ENCODE measurements at regions of chr13 and their contacts with region 1.

Region 1: DNA sequence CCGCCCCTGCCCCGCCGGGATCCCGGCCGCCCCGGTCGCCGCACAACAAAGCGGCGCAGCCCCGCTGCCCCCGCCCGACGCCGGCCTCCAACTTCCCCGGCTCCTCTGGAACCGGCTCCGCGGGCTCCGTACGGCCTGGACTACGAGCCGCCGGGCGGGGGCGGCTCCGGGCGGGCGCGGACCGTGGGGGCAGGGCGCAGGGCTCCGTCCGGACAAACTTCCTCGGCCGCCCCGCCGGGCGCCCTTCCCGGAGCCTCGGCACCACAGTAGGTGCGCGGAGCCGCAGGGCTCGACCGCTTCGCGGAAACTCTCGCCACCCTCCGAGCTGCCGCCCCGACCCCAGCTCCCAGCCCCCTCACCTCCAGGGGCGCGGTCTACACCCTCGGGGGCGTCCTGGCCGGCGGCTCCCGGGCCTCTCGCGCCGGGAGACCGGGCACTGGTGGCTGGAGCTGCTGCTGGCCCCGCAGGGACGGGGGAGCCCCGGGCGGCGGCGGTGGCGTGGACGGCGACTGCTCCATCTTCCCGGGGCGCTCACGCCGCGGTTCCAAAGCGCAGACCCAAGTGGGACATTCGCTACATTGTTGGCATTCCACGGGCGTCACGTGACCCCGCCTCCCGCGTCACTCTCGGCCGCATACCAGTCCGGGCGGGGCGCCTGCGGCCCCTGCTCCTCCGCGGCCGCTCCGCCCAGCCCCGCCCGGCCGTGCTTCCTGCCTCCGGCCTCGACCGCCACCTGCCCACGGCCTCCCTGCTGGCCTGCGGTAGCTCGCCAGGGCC is at the start of gene LATS2:
- DNase-seq: peak; percentile 94
- ATAC-seq: peak; percentile 83
- H3K4me3 ChIP-seq: peak within 1 kb of the TSS; percentile 96
- H3K27ac ChIP-seq: peak within 1 kb of the TSS; percentile 75
- H3K4me1 ChIP-seq: peaks cover 18% of the 10 kb centered on the region
- H3K27me3 ChIP-seq: no peaks in the 10 kb centered on the region
- CTCF ChIP-seq: no peak
- total RNA-seq, gene LATS2: 11.0 and 11.1 TPM in 2 replicates

Region 2: DNA sequence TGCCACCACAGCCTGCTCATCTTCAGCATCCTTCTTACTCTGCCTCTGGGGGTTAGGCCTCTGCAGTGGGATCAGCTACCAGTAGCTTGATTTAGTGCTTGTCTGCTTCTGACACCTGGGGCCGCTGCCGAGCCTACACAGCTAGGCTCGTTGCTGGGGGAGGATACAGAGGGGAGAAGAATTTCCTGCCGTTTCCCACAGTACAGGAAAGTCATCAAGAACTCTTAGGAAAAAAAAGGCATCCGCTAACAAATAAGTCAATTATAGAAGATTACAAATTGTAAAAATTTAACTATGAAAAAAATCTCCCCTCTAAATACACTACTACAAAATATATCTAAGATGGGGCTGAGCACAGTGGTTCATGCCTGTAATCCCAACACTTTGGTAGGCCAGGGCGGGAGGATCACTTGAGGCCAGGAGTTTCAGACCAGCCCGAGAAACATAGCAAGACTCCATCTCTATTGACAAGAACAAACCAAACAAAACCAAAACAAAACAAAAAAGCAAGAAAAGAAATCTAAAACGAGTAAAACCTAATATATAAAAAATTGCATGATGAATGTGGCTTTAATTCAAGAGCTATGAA is 26.5 kb before region 1 on chr13:
- CTCF ChIA-PET with region 1: interaction called, 3 read pairs
- POLR2A ChIA-PET with region 1: interaction called, 4 read pairs
- intact Hi-C with region 1: loop called (anchors 1 kb)
- DNase-seq: peak; percentile 36
- ATAC-seq: peak; percentile 17
- H3K4me3 ChIP-seq: 0 out of 2 replicates have a peak overlapping the region, but pooled peaks have one; percentile 13
- H3K27ac ChIP-seq: peak overlapping the region; percentile 99
- H3K4me1 ChIP-seq: peaks cover 31% of the 10 kb centered on the region
- H3K27me3 ChIP-seq: no peaks in the 10 kb centered on the region
- CTCF ChIP-seq: peak; percentile 52

Region 3: GRCh38 chr13:21075011-21075898 is 14.1 kb after region 1 on chr13:
- CTCF ChIA-PET with region 1: no interaction called
- POLR2A ChIA-PET with region 1: no interaction called
- intact Hi-C with region 1: no loop called
- DNase-seq: no peak
- ATAC-seq: peak; percentile 54
- H3K4me3 ChIP-seq: peak overlapping the region; percentile 69
- H3K27ac ChIP-seq: no peak overlapping the region
- H3K4me1 ChIP-seq: peaks cover 22% of the 10 kb centered on the region
- H3K27me3 ChIP-seq: no peaks in the 10 kb centered on the region
- CTCF ChIP-seq: no peak

Region 4: GRCh38 chr13:21106089-21106488 is 44.9 kb after region 1 on chr13:
- CTCF ChIA-PET with region 1: no interaction called
- POLR2A ChIA-PET with region 1: no interaction called
- intact Hi-C with region 1: no loop called
- DNase-seq: peak; percentile 40
- ATAC-seq: peak; percentile 24
- H3K4me3 ChIP-seq: no peak overlapping the region
- H3K27ac ChIP-seq: no peak overlapping the region
- H3K4me1 ChIP-seq: peaks cover 10% of the 10 kb centered on the region
- H3K27me3 ChIP-seq: no peaks in the 10 kb centered on the region
- CTCF ChIP-seq: no peak

Measured in PC-3 (cell line).